Gastrocnemius medialis (tissue), 4 donors: ENCODE measurements at regions of chr5 and their contacts with region 1.

Region 1: DNA sequence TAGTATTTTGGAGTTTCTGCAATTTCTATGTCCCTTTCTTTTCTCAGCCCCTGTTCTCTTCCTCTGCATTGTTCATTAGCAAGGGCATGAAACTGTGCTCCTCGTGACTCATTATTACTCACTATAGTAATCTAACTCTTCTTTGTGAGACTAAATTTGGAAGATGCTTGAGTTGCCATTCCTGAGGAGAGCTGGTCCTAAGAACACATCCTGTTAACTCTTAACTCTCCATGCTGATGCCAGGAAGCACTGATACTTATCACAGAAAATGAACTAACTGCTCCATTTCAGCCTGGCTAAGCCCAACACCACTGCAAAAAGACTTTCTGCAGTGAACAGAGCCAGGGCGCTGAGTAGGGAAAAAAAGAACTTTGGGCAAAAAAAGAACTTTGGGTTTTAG is 10.6 kb upstream of the CSNK1A1 start:
- DNase-seq: peak in 1 of 2 donors; percentile 27
- ATAC-seq: peak; percentile 96 to 98
- H3K4me3 ChIP-seq: peak overlapping the region in 3 of 4 donors; percentile 3 to 8 (median 4)
- H3K27ac ChIP-seq: peak overlapping the region; percentile 74 to 83 (median 80)
- H3K4me1 ChIP-seq: peaks cover 20 to 35% of the 10 kb centered on the region in 2 donors
- H3K27me3 ChIP-seq: no peaks in the 10 kb centered on the region
- CTCF ChIP-seq: no peak
- POLR2A ChIP-seq: no peak

Region 2: GRCh38 chr5:149381987-149382340 is 179.9 kb before region 1 on chr5:
- in situ Hi-C with region 1: loop called (anchors 5 kb)
- intact Hi-C with region 1: loop called (anchors 1 kb)
- DNase-seq: peak; percentile 40 to 62
- ATAC-seq: peak; percentile 83 to 84
- H3K4me3 ChIP-seq: peak overlapping the region in 1 of 4 donors; percentile 22
- H3K27ac ChIP-seq: peak overlapping the region in 3 of 4 donors; percentile 64 to 76 (median 75)
- H3K4me1 ChIP-seq: peaks cover 21 to 24% of the 10 kb centered on the region in 2 donors
- H3K27me3 ChIP-seq: no peaks in the 10 kb centered on the region
- CTCF ChIP-seq: peak; percentile 82 to 98 (median 94)
- POLR2A ChIP-seq: no peak

Region 3: DNA sequence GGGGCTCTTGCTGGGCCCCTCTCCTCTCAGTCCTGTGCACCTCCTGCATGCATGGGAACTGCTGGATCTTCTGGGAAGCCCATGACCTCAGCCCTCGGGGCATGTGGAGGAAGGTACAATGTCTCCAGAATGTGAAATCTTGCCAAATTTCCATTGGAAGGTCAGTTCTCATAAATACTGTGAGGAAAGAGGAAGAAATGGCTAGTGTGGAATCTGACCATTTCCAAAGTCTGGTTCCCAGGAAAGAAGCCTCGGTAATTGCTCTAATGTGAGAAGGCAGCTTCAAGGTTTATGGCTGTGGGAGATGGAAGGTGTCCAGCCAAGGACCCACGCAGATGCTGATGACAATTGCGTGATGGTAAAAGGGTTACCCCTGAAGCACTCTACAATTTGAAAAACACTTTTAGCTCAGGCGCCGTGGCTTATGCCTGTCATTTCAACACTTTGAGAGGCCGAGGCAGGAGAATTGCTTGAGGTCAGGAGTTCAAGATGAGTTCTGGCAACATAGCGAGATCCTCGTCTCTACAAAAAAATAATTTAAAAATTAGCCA is 174.7 kb before region 1 on chr5:
- in situ Hi-C with region 1: loop called in 3 of 4 experiments (anchors 5 kb)
- intact Hi-C with region 1: loop called (anchors 1 kb)
- DNase-seq: no peak
- ATAC-seq: no peak
- H3K4me3 ChIP-seq: no peak overlapping the region
- H3K27ac ChIP-seq: peak overlapping the region; percentile 42 to 76 (median 70)
- H3K4me1 ChIP-seq: peaks cover 28 to 38% of the 10 kb centered on the region in 2 donors
- H3K27me3 ChIP-seq: no peaks in the 10 kb centered on the region
- CTCF ChIP-seq: no peak
- POLR2A ChIP-seq: no peak

Region 4: DNA sequence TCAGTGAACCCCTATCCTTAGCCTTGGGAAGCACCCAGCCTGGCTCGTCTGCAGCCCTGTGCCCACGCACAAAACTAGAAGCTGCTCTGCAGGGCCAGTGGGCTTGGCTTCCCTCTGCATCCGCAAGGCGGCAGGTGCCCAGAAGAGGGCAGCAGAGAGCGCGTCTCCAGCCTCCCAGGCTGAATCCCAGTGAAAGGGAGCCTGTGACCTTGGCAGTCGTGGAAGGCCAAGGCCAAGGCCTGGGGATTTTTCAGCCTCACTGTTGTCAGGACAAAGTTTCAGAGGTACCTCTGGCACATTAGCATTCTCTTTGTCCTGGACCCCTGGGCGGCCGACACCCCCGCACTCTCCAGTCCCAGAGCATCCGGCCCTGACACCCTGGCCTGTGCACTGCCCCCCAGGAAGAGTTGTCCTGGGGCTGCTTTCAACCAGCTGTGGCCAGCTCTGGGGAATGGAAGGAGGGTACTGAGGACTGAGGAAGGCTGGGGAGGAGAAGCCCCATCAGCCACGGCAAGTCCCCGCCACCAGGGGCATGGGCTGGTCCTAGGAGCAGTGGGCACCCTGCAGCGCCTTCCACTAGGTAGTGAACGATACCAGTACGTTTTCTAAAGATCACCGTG is 119.2 kb before region 1 on chr5:
- in situ Hi-C with region 1: loop called in 1 of 4 experiments (anchors 5 kb)
- intact Hi-C with region 1: loop called (anchors 1 kb)
- DNase-seq: peak; percentile 62 to 80
- ATAC-seq: peak; percentile 77 to 88
- H3K4me3 ChIP-seq: no peak overlapping the region
- H3K27ac ChIP-seq: peak overlapping the region; percentile 29 to 85 (median 78)
- H3K4me1 ChIP-seq: peaks cover 5 to 17% of the 10 kb centered on the region in 2 donors
- H3K27me3 ChIP-seq: no peaks in the 10 kb centered on the region
- CTCF ChIP-seq: peak; percentile 90 to 97 (median 95)
- POLR2A ChIP-seq: no peak